Activated B cell treated with CpG ODN at 0.5 μM for 24 hours (primary cell): ENCODE measurements at regions of chrX and their contacts with region 1.

Region 1: DNA sequence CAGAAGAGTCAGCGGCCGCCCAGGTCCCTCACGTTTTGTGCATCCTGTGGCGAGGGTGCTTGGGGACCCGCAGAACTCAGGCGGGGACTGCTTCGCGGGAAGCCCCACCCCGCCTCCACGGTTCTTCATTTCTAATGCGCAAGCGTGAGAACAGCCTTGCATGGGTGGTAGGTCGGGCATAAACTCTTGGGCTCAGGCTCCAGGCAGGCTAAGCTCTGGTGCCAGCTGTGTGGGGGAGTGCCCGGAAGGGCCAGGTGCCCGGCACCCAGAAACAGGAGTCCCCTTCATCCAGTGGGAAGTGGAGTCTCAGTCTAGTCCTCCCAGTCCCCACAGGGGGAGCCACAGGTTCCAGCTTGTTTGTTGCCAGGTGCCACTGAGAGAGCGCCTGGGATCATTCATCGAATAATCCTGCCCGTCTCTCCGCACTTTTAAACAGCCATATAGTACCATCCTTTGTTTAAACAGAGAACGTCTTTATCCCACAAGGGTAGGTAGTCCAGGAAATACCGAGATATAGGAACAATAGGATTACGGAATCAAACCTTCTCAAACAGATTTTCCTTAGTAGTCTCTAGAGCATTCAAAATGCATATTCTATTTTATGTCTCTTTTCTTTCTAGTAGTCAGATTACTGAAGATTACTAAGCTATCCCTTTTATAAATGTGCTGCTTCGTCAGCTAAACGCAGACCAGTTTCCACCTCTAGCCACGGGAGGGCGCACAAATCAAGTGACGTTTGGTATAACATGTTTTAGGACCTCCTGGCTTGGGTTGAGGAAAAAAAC is 12.7 kb upstream of the RBBP7 start:
- DNase-seq: peak; percentile 47
- ATAC-seq: peak; percentile 88
- H3K4me3 Mint-ChIP-seq: peak overlapping the region; percentile 78
- H3K27ac Mint-ChIP-seq: peak overlapping the region; percentile 86
- H3K4me1 Mint-ChIP-seq: peaks cover 20% of the 10 kb centered on the region
- H3K27me3 Mint-ChIP-seq: no peaks in the 10 kb centered on the region
- CTCF ChIP-seq: peak; percentile 46

Region 2: DNA sequence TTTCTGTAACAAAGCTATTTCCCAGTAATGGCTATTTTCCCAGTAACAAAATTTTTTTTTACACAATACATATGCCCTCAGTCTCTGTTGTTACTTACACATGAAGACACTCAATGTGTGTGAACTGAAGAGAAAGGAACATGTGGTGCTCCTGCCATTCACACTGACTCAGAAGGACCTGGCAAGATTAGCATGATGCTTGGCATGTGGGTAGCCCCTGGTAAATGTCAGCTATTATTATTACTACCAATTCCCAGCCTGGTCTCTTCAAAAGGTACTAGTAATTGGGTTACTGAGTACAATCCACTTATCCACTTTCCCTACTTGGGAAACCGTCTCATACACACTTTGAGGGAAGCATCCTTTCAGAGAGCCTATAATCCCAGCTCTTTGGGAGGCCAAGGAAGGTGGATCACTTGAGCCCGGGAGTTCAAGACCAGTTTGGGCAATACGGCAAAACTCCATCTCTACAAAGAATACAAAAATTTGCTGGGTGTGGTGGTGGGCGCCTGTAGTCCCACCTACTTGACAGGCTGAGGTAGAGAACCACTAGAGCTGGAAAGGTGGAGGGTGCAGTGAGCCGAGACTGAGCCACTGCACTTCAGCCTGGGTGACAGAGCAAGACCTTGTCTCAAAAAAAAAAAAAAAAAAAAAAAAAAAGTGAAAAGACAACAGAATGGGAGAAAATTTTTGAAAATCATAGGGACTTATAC is 27.4 kb before region 1 on chrX:
- CTCF ChIA-PET with region 1: interaction called, 6 read pairs
- POLR2A ChIA-PET with region 1: interaction called, 4 read pairs
- intact Hi-C with region 1: loop called (anchors 2 kb)
- DNase-seq: no peak
- ATAC-seq: peak; percentile 89
- H3K4me3 Mint-ChIP-seq: no peak overlapping the region
- H3K27ac Mint-ChIP-seq: peak overlapping the region; percentile 75
- H3K4me1 Mint-ChIP-seq: peaks cover 21% of the 10 kb centered on the region
- H3K27me3 Mint-ChIP-seq: no peaks in the 10 kb centered on the region
- CTCF ChIP-seq: no peak